ENCODE measurements at regions of chr2 and their contacts with region 1.

Region 1: GRCh38 chr2:229578052-229578846 is 136.1 kb downstream of the DNER start:
- DNase-seq: peak; percentile 32
- ATAC-seq: peak; percentile 92
- H3K4me3 Mint-ChIP-seq: no peak overlapping the region
- H3K27ac Mint-ChIP-seq: no peak overlapping the region
- H3K4me1 Mint-ChIP-seq: peaks cover 7% of the 10 kb centered on the region
- H3K27me3 Mint-ChIP-seq: no peaks in the 10 kb centered on the region; the same call in 1 of the 2 replicates
- CTCF ChIP-seq: no peak

Region 2: GRCh38 chr2:229342376-229342775 is 235.9 kb before region 1 on chr2:
- CTCF ChIA-PET with region 1: interaction called, 16 read pairs
- POLR2A ChIA-PET with region 1: no interaction called
- DNase-seq: peak; percentile 83
- ATAC-seq: peak; percentile 91
- H3K4me3 Mint-ChIP-seq: no peak overlapping the region
- H3K27ac Mint-ChIP-seq: no peak overlapping the region
- H3K4me1 Mint-ChIP-seq: no peaks in the 10 kb centered on the region
- H3K27me3 Mint-ChIP-seq: no peaks in the 10 kb centered on the region
- CTCF ChIP-seq: peak; percentile 42; the same call in 1 of the 2 replicates

Region 3: GRCh38 chr2:229431327-229431954 is 146.8 kb before region 1 on chr2:
- CTCF ChIA-PET with region 1: interaction called, 16 read pairs
- POLR2A ChIA-PET with region 1: no interaction called
- DNase-seq: no peak
- ATAC-seq: peak; percentile 28; the same call in 1 of the 2 replicates
- H3K4me3 Mint-ChIP-seq: no peak overlapping the region
- H3K27ac Mint-ChIP-seq: no peak overlapping the region
- H3K4me1 Mint-ChIP-seq: peaks cover 3% of the 10 kb centered on the region; the same call in 1 of the 2 replicates
- H3K27me3 Mint-ChIP-seq: no peaks in the 10 kb centered on the region
- CTCF ChIP-seq: peak; percentile 43; the same call in 1 of the 2 replicates

Region 4: DNA sequence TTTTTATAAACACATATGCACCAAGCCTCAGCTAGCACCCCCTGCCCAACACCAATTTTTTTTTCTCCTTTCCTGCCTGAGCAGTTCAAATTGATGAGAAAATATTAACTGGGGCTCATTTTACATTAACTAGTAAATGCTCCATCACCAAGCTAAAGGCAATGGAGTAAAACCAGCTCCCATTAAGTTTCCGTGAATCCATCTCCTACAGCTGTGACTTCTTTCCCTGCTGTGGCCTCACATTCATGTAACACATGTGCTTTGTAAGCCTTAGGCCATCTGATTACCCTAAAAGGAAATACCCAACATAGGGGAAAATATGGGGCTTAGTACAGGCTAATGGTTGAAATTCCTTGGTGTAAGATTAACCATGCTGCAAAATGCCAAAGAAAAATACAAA is 75.3 kb after region 1 on chr2:
- CTCF ChIA-PET with region 1: no interaction called
- POLR2A ChIA-PET with region 1: no interaction called
- DNase-seq: no peak
- ATAC-seq: no peak
- H3K4me3 Mint-ChIP-seq: no peak overlapping the region
- H3K27ac Mint-ChIP-seq: no peak overlapping the region
- H3K4me1 Mint-ChIP-seq: peaks cover 18% of the 10 kb centered on the region
- H3K27me3 Mint-ChIP-seq: no peaks in the 10 kb centered on the region
- CTCF ChIP-seq: no peak

Measured in WTC11 (cell line).